Astrocyte of the cerebellum (primary cell): ENCODE measurements at regions of chr22 and their contacts with region 1.

Region 1: DNA sequence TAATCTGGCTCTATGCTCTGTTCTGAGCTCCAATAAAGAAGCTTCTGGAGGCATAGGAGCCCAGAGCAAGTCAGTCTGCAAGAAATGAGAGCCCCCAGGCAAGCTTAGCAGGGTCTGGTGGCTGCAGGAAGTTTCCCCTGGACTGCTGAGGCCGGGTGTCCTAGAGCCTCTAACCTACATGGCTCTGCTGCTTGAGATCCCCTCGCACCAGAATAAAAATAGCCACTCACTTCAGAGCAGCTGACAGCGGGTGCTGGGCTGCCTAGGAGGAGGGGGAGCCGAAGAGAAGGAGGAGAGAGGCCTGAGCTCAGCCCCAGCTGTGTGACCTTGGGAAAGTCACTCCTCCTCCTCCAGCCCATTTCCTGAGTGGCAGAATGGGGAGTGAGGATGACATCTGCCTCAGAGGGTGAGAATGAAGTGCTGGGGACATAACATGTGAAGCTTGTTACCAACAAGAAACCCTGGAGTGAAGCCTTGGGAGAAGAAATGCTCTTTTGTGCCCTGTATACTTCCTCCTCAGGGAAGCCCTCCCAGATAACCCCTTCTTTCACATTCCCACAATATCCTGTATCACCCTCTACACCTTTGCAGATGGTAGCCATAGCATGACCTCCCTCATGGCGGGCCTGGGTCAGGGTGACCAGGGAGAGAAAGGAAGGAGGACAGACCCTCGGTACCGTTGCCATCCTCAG is 3.6 kb upstream of the INPP5J start:
- DNase-seq: no peak
- H3K4me3 ChIP-seq: no peak overlapping the region
- CTCF ChIP-seq: no peak

Region 2: GRCh38 chr22:31173386-31174145 is 54.4 kb after region 1 on chr22:
- in situ Hi-C with region 1: loop called (anchors 5 kb)
- DNase-seq: peak; percentile 60
- H3K4me3 ChIP-seq: no peak overlapping the region
- CTCF ChIP-seq: no peak